Left cardiac atrium (tissue), 4 donors: ENCODE measurements at regions of chr13 and their contacts with region 1.

Region 1: DNA sequence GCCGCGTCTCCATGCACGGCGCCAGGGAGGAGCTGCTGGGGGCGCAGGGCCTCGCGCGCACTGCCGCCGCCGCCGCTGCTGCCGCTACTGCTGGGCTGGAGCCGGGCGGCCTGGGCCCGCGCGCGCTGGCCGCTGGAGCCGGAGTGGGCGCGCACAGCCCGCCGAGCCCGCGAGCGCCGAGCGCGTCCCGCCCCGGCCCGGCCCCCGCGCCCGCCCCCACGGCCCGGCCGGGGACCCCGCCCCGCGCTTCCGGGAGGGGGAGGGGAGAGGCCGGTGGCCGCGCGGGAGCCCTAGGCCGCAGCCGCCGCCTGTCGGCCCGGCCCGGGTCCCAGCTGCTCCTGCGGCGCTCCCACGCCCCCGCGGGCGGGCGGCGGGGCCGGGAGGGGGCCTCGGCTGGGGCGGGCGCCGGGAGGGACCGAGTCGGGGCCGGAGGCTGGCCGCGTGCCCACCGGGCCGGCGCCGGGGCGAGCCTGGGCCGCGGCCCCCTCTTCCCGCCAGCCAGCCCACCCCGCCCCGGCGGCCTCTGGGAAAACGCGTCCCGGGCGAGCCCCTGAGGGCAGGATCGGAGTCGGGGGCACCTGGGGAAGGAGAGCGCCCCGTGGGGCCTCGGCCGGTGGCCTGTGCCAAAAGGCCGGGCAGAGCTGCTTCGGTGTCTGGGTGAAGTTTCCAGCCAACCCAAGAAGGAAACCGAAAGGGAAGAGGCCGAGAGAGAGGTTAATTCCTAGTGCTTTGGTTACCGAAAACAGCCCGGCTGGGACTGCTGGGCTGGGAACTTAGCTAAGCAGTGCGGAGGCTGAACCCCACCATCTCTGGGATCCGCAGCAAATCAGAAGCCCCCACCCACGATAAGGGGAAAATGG is at the start of gene STK24:
- DNase-seq: peak; percentile 77
- ATAC-seq: peak; percentile 79 to 88
- total RNA-seq, gene STK24: 57.6 to 62.2 TPM

Region 2: GRCh38 chr13:98445340-98446233 is 131.6 kb before region 1 on chr13:
- intact Hi-C with region 1: loop called in 1 of 2 experiments (anchors 10 kb)
- DNase-seq: peak; percentile 72
- ATAC-seq: peak; percentile 84 to 87

Region 3: DNA sequence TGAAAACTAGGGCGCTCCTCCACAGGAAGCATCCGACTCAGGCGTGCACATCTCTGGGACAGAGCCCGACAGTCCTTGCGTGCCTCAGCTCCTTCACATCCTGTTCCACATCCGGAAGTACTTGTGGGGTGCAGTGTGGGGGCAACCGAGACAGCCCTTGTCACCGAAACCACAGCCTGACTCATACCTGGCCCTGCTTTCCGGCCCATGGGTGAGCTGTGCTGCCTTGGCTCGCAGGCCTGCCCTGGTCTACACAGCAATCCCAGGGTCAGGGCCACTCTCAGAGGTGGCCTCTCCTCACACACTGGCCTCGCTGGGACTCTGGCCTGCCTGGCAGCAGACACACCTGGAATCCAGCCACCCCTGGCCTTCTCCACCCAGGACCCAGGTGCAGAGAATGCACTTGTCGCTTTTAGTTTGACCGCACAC is 100.6 kb before region 1 on chr13:
- intact Hi-C with region 1: loop called (anchors 5 to 10 kb)
- DNase-seq: peak; percentile 73
- ATAC-seq: peak; percentile 65 to 73

Region 4: DNA sequence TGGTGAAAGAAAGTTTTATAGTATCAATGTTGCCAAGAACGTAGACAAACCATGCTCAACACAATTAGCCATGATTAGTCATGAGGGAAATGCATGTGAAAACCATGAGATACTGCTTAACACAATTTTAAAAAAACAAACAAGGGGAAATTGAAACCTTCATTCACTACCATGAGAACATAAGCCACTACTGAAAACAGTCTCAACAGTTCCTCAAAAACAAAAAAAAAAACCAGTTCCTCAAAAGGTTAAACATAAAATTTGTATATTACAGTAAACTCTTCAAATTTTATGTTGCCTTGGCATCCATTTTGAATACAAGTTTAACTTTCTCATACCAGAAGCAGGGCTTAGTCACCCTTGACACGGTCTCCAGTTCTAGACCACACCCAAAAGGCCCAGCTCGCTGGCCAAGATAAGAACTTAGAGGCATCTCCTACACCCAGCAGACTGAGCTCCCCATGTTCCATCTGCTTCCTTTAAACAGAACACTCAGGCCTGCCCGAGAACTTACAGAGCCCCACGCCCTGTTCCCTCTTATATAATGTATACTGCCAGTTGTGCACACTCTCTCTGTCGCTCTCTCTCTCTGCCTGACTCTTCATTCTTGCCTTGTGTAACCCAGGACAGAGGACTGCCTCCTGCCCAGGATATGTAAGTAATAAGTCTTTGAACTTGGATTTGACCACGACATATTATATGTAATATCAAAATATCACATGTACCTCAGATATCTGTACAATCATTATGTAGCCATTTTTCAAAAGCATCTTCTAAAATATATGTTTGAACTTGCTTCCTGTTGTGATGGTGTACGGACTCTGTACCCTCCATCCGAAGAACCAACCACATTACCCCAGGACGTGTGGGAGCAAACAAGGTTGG is 67.7 kb before region 1 on chr13:
- intact Hi-C with region 1: loop called in 1 of 2 experiments (anchors 10 kb)
- DNase-seq: peak; percentile 83
- ATAC-seq: peak; percentile 48 to 88

Region 5: GRCh38 chr13:98653463-98653985 is 76.3 kb after region 1 on chr13:
- intact Hi-C with region 1: loop called in 1 of 2 experiments (anchors 10 kb)
- DNase-seq: peak; percentile 83
- ATAC-seq: peak; percentile 85 to 87